ENCODE measurements at regions of chr5 and their contacts with region 1.

Region 1: GRCh38 chr5:173293817-173294672 is 34.2 kb downstream of the STC2 start:
- DNase-seq: peak; percentile 78
- ATAC-seq: peak; percentile 79
- H3K4me3 Mint-ChIP-seq: peak overlapping the region; percentile 42
- H3K27ac Mint-ChIP-seq: no peak overlapping the region
- H3K4me1 Mint-ChIP-seq: peaks cover 11% of the 10 kb centered on the region
- H3K27me3 Mint-ChIP-seq: peaks cover 44% of the 10 kb centered on the region
- CTCF ChIP-seq: peak; percentile 87

Region 2: DNA sequence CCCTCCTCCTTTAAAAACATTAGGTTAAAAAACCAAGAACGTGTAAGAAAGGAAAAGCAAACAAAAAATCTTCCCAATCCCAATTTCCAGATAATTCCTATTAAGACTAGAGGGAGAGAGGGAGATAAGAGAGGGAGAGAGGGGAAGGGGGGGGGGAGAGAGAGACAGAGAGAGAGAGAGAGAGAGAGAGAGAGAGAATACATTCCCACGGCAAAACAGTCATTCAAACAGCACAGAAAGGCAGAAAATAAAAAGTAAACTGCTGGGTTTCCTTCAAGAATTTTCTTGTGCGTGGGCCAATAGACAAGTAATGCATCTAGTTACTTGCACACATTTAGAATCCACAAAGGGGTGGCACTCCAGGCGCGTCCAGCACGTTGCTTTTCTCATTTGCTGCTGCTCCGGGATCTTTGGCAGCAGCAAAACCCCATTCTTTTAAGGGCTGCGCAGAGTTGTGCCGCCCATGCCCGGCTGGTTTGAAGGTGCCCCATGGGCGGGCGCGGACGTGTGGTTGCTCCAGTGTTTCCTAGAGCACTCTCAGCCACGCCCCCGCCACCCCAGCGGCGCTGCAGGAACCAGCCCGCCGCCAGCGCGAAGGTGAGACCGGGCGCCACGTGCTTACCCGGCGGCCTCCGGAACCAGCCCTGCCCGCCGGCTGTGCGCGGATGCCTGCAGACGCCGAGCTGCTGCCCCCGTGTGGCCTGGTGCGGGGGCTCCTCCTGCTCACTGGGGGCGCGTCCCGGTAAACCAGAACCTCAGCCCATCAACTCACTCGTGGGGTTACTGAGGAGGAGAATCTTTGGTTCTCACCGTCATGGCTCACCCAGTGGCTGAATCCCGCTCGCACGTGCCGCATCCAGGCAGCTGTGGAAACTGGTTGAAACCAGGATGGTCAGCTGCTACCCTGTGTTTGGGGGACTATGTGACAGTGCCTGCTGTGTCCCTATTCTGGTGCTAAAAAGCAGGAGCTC is 10.4 kb before region 1 on chr5:
- CTCF ChIA-PET with region 1: interaction called, 14 read pairs
- POLR2A ChIA-PET with region 1: no interaction called
- intact Hi-C with region 1: no loop called
- DNase-seq: peak; percentile 85
- ATAC-seq: peak; percentile 92
- H3K4me3 Mint-ChIP-seq: peak overlapping the region; percentile 41
- H3K27ac Mint-ChIP-seq: no peak overlapping the region
- H3K4me1 Mint-ChIP-seq: peaks cover 15% of the 10 kb centered on the region
- H3K27me3 Mint-ChIP-seq: peaks cover 47% of the 10 kb centered on the region
- CTCF ChIP-seq: peak; percentile 68

Region 3: DNA sequence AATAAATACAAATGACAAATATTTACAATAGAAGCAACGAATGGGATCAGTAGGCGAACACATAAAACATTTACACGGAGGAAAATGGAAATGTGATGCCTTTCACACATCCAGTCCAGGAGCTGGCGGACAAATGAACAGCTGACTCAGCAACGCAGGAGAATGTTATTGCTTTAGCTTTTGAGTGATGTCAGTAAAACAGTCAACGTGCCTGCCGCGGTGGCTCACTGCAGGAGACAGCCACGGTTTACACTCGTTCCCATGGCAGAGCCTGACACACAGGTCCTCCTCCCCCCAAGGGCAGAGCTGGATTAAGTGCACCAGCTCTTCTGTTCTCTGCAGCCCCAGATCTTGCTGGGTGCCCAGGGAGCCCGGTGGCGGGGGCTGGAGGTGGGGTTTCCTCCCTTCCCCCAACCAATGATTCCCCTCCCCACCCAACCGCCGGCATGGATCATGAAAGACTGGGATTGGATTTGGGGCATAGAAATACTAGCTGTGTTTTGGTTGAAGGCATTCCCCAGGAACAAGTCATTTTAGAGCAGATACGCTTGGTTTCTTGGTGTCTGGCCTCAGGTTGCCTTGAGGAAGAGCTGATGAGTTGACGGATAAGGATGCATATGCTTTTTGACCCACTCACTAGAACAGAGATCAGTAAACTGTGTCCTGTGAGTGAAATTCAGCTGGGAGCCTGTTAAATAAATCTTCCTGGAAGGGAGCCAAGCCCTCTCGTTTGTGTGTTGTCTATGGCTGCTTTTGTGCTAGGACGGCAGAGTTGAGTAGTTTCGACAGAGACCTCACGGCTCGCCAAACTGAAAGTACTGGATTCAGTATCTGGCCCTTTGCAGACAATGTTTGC is 21.7 kb after region 1 on chr5:
- CTCF ChIA-PET with region 1: interaction called, 27 read pairs
- POLR2A ChIA-PET with region 1: interaction called, 4 read pairs
- intact Hi-C with region 1: no loop called
- DNase-seq: peak; percentile 29
- ATAC-seq: peak; percentile 52
- H3K4me3 Mint-ChIP-seq: no peak overlapping the region
- H3K27ac Mint-ChIP-seq: no peak overlapping the region
- H3K4me1 Mint-ChIP-seq: no peaks in the 10 kb centered on the region
- H3K27me3 Mint-ChIP-seq: peaks cover 15% of the 10 kb centered on the region
- CTCF ChIP-seq: no peak

Region 4: DNA sequence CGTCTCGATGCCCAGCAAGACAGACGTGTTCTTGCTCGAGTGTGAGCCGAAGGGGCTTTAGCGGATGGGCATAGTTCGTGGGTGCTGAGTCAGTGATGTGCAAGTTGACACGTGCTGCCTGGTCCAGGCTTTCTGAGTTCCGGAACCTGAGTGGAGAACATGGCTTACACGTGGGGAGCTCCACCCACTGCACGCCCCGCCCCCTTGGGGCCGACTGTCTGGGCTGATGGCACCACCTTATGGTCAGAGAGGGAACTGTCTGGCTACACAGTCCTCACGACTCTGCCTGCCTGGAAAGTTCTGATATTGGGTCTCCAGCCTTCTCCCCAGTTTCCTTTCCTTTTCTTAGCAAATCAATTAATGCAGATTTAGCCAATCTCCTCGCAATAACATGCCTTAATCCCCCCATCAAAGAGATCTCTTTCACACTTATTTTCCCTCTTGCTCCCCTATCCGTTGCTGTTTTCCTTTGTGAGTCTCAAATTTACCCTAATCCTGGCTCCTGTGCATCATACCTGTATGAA is 38.0 kb after region 1 on chr5:
- CTCF ChIA-PET with region 1: interaction called, 180 read pairs
- POLR2A ChIA-PET with region 1: interaction called, 5 read pairs
- intact Hi-C with region 1: loop called (anchors 2 kb)
- DNase-seq: peak; percentile 95
- ATAC-seq: peak; percentile 76
- H3K4me3 Mint-ChIP-seq: no peak overlapping the region
- H3K27ac Mint-ChIP-seq: no peak overlapping the region
- H3K4me1 Mint-ChIP-seq: peaks cover 16% of the 10 kb centered on the region
- H3K27me3 Mint-ChIP-seq: peaks cover 40% of the 10 kb centered on the region
- CTCF ChIP-seq: peak; percentile 82

Region 5: GRCh38 chr5:173573126-173573960 is 279.3 kb after region 1 on chr5:
- CTCF ChIA-PET with region 1: interaction called, 33 read pairs
- POLR2A ChIA-PET with region 1: no interaction called
- intact Hi-C with region 1: loop called (anchors 2 kb)
- DNase-seq: peak; percentile 67
- ATAC-seq: peak; percentile 82
- H3K4me3 Mint-ChIP-seq: no peak overlapping the region
- H3K27ac Mint-ChIP-seq: no peak overlapping the region
- H3K4me1 Mint-ChIP-seq: peaks cover 3% of the 10 kb centered on the region
- H3K27me3 Mint-ChIP-seq: peaks cover 17% of the 10 kb centered on the region
- CTCF ChIP-seq: peak; percentile 90

Measured in activated CD8-positive, alpha-beta T cell treated with anti-CD3 and anti-CD28 coated beads for 36 hours (primary cell).